ENCODE measurements at regions of chr3 and their contacts with region 1.

Region 1: DNA sequence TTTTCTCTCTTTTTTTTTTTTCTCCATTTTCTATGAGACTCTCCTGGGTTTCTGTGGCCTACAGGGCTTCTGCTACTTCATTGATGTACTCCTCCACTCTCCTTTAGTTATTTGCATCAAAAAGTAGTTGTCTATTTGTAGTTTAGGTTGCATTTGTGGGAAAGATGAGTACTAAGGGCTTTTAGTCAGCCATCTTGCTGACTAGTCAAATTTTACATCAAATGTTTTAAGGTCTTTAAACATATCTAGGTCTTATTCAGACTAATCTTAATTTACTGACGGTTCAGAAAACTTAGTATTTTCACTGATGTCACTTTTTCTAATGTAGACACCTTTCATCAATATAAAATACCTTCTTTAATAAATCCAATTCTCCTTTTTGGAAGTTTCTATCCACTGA is 871.0 kb downstream of the PLOD2 start:
- DNase-seq: no peak
- CTCF ChIP-seq: no peak

Region 2: GRCh38 chr3:145088917-145089316 is 201.1 kb before region 1 on chr3:
- CTCF ChIA-PET with region 1: no interaction called
- POLR2A ChIA-PET with region 1: no interaction called
- DNase-seq: no peak
- CTCF ChIP-seq: no peak

Region 3: GRCh38 chr3:145272684-145273083 is 17.3 kb before region 1 on chr3:
- CTCF ChIA-PET with region 1: interaction called, 13 read pairs
- POLR2A ChIA-PET with region 1: no interaction called
- DNase-seq: no peak
- CTCF ChIP-seq: no peak

Region 4: DNA sequence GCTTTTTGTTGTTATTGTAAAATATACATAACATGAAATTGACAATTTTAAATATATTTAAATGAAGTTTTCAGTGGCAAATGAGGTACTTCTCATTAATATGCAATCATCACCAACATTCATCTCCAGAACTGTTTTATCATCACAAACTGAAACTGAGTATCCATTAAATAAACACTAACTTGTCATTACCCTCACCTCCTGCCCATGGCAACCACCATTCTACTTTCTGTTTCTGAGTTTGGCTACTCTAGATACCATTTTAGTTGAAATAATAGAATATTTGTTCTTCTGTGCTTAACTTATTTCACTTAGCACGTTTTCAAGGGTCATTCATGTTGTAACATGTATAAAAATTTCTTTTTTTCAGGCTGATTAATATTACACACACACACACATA is 36.7 kb after region 1 on chr3:
- CTCF ChIA-PET with region 1: no interaction called
- POLR2A ChIA-PET with region 1: no interaction called
- DNase-seq: no peak
- CTCF ChIP-seq: no peak

Measured in GM10248 (cell line).